Breast epithelium (tissue), 4 donors: ENCODE measurements at regions of chr16 and their contacts with region 1.

Region 1: GRCh38 chr16:30793508-30794069 is 6.6 kb upstream of the ZNF629 start:
- DNase-seq: no peak
- H3K4me3 ChIP-seq: no peak overlapping the region
- H3K27ac ChIP-seq: no peak overlapping the region
- H3K4me1 ChIP-seq: no peaks in the 10 kb centered on the region
- H3K27me3 ChIP-seq: no peaks in the 10 kb centered on the region
- CTCF ChIP-seq: no peak
- POLR2A ChIP-seq: no peak

Region 2: DNA sequence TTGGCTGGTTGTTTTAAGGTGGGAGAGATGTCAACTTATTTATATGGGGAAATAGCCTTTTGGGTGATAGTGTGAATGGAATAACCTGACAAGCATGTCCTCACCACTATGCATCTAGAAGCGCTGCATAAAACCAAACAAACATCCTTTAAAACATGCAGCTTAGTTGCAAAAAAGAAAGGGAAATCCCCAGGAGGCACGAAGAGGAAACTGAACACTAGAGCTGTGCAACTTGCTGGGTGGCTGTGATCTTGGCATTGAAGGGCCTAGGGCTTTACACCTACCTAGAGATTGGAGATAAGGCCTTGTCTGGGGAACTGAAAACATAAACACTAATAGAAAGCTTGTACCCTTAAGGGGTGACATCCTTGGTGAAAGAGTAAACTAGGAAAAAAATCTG is 1055.1 kb before region 1 on chr16:
- intact Hi-C with region 1: loop called (anchors 5 kb)
- DNase-seq: no peak
- H3K4me3 ChIP-seq: no peak overlapping the region
- H3K27ac ChIP-seq: no peak overlapping the region
- H3K4me1 ChIP-seq: no peaks in the 10 kb centered on the region
- H3K27me3 ChIP-seq: no peaks in the 10 kb centered on the region
- CTCF ChIP-seq: no peak
- POLR2A ChIP-seq: no peak